Mammary epithelial cell (primary cell): ENCODE measurements at regions of chr9 and their contacts with region 1.

Region 1: DNA sequence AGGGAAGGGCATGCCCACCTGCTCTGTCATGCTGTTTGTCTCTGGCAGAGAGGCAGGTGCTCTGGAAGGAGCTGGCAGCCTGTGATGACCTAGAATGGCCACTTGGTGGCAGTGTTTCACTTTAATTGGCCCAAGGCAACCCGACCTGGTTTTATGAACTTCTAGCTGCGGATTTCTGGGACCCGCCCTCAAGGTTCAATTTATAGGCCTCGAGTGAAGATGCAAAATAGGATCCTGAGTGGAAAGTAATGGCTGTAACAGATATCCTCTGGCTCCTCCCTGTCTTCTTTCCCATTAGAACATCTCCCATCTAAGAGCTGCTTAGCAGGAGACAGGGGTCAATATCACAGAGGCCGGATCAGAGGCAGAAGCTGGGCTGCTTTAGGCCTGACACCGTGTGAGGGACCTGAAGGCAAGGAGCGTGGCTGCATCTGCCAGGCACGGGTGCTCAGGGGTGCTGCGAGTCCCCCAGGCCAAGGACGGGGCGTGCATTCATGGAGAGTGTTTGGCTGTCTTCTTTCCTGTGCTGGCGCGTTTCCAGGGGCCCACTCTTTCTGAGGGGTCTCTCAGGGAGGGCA is 56.7 kb upstream of the SLC28A3 start:
- DNase-seq: peak; percentile 43
- H3K4me3 ChIP-seq: no peak overlapping the region
- H3K27ac ChIP-seq: no peak overlapping the region
- H3K4me1 ChIP-seq: no peaks in the 10 kb centered on the region
- H3K27me3 ChIP-seq: no peaks in the 10 kb centered on the region
- CTCF ChIP-seq: peak; percentile 81 to 88

Region 2: DNA sequence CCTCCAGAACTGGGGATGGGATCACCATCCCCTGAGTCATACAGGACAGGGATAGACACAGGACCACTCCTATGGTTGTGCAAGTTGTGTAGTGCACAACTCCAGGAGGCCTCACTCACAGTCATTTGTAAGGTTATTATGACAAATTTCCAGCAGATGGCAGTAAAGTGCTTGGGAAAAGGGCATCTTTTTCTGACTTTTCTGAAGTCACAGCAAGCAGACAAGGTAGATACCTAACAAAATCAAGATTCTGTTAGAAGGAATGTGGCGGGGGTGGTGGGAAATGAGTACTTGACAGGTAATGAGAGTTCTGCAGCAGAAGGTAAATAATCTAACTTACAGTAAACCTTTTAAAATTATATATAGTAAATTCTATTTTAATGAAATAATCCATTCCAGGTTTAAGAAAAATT is 459.3 kb before region 1 on chr9:
- CTCF ChIA-PET with region 1: no interaction called
- dilution Hi-C with region 1: no loop called
- in situ Hi-C with region 1: no loop called
- intact Hi-C with region 1: loop called (anchors 5 kb)
- DNase-seq: peak; percentile 61
- H3K4me3 ChIP-seq: no peak overlapping the region
- H3K27ac ChIP-seq: no peak overlapping the region
- H3K4me1 ChIP-seq: peaks cover 32% of the 10 kb centered on the region
- H3K27me3 ChIP-seq: no peaks in the 10 kb centered on the region
- CTCF ChIP-seq: peak; percentile 55 to 65

Region 3: GRCh38 chr9:84668196-84669012 is 271.2 kb after region 1 on chr9:
- CTCF ChIA-PET with region 1: no interaction called
- dilution Hi-C with region 1: no loop called
- in situ Hi-C with region 1: loop called in 1 of 2 experiments (anchors 25 kb)
- intact Hi-C with region 1: loop called (anchors 2 kb)
- DNase-seq: peak; percentile 74
- H3K4me3 ChIP-seq: peak overlapping the region; percentile 12 to 50 (median 46)
- H3K27ac ChIP-seq: no peak overlapping the region
- H3K4me1 ChIP-seq: peaks cover 31% of the 10 kb centered on the region
- H3K27me3 ChIP-seq: peaks cover 10% of the 10 kb centered on the region
- CTCF ChIP-seq: peak; percentile 54 to 57

Region 4: GRCh38 chr9:84781458-84781857 is 384.2 kb after region 1 on chr9:
- CTCF ChIA-PET with region 1: interaction called, 3 read pairs
- dilution Hi-C with region 1: no loop called
- in situ Hi-C with region 1: no loop called
- intact Hi-C with region 1: loop called (anchors 1 kb)
- DNase-seq: peak; percentile 13
- H3K4me3 ChIP-seq: no peak overlapping the region
- H3K27ac ChIP-seq: no peak overlapping the region
- H3K4me1 ChIP-seq: no peaks in the 10 kb centered on the region
- H3K27me3 ChIP-seq: no peaks in the 10 kb centered on the region
- CTCF ChIP-seq: peak; percentile 55

Region 5: GRCh38 chr9:84953797-84954705 is 556.8 kb after region 1 on chr9:
- CTCF ChIA-PET with region 1: no interaction called
- dilution Hi-C with region 1: no loop called
- in situ Hi-C with region 1: loop called in 1 of 2 experiments (anchors 25 kb)
- intact Hi-C with region 1: loop called (anchors 2 kb)
- DNase-seq: peak; percentile 73
- H3K4me3 ChIP-seq: no peak overlapping the region
- H3K27ac ChIP-seq: peak overlapping the region; percentile 67
- H3K4me1 ChIP-seq: peaks cover 14% of the 10 kb centered on the region
- H3K27me3 ChIP-seq: no peaks in the 10 kb centered on the region
- CTCF ChIP-seq: peak; percentile 99

Region 6: DNA sequence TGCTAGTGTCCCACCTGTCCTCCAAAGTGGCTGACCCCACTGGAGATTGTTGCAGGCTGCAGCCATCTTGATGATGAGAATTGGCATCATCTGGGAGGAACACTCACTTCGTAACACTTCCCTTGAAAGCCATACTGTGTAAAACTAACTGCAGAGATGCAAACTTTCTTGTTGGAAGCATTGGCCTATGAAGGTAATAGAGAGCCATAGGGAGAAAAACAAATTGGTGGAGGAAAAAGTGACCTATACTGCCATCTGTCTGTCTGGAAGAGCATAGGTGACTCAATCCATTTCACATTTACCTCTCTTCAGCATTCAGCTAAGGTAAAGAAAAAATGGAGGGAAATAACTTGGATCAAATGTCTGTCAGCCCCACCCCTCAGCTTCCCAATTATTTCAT is 745.7 kb after region 1 on chr9:
- CTCF ChIA-PET with region 1: interaction called, 4 read pairs
- dilution Hi-C with region 1: no loop called
- in situ Hi-C with region 1: no loop called
- intact Hi-C with region 1: loop called (anchors 2 kb)
- DNase-seq: peak; percentile 28
- H3K4me3 ChIP-seq: no peak overlapping the region
- H3K27ac ChIP-seq: no peak overlapping the region
- H3K4me1 ChIP-seq: no peaks in the 10 kb centered on the region
- H3K27me3 ChIP-seq: no peaks in the 10 kb centered on the region
- CTCF ChIP-seq: peak; percentile 69 to 70

Region 7: GRCh38 chr9:85610074-85610860 is 1213.0 kb after region 1 on chr9:
- CTCF ChIA-PET with region 1: interaction called, 5 read pairs
- dilution Hi-C with region 1: no loop called
- in situ Hi-C with region 1: no loop called
- intact Hi-C with region 1: loop called (anchors 2 kb)
- DNase-seq: peak; percentile 53
- H3K4me3 ChIP-seq: peak overlapping the region in 2 of 3 experiments; percentile 29 to 31
- H3K27ac ChIP-seq: no peak overlapping the region
- H3K4me1 ChIP-seq: no peaks in the 10 kb centered on the region
- H3K27me3 ChIP-seq: no peaks in the 10 kb centered on the region
- CTCF ChIP-seq: peak; percentile 75 to 81